Activated CD4-positive, alpha-beta T cell treated with anti-CD3 and anti-CD28 coated beads for 36 hours (primary cell): ENCODE measurements at regions of chr6 and their contacts with region 1.

Region 1: GRCh38 chr6:151723152-151723551 is 84.3 kb upstream of the ESR1 start:
- DNase-seq: peak; percentile 76
- ATAC-seq: peak; percentile 96
- H3K4me3 Mint-ChIP-seq: no peak overlapping the region
- H3K27ac Mint-ChIP-seq: peak overlapping the region; percentile 38
- H3K4me1 Mint-ChIP-seq: peaks cover 39% of the 10 kb centered on the region
- H3K27me3 Mint-ChIP-seq: peaks cover 12% of the 10 kb centered on the region

Region 2: DNA sequence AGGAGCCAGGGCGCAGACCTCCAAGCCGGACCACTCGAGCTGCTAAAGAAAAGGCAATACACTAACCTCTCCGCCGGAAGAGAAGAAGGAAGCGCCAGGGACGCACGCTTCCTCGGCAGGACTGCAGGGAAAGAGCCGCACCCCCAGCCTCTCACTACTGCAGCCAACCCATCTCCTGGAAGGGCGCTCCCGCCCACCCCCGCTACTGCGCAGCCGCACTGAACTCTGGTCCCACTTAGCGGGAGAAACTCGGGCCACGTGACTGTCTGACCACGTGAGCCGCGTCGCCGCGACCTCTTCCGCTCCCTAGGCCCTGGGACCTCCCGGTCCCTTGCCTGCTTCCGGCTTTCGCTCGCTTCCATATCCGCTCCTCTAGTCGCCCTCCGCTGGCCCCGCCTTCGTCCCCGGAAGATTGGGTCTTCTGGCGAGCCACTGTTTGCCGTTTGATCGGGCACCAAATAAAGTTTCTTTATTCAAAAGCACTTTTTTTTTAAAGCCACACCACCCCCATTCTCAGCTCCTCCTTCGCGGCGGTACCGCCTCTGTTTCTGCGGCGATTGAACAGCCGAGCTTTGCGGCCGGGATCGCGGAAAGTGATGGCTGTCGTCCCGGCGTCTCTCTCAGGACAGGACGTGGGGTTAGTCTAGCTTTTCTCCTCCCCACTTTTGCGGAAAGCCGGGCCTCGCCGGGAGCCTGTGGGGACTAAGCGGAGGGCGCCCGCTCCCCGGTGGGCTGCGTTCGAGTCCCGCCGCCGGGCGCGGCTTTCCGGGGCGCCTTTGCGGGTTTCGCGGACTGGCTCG is 271.0 kb before region 1 on chr6 and contains the start of gene RMND1:
- CTCF ChIA-PET with region 1: no interaction called
- POLR2A ChIA-PET with region 1: no interaction called
- intact Hi-C with region 1: no loop called
- DNase-seq: peak; percentile 100
- ATAC-seq: peak; percentile 98
- H3K4me3 Mint-ChIP-seq: peak within 1 kb of the TSS; percentile 96
- H3K27ac Mint-ChIP-seq: peak within 1 kb of the TSS; percentile 85
- H3K4me1 Mint-ChIP-seq: peaks cover 30% of the 10 kb centered on the region
- H3K27me3 Mint-ChIP-seq: no peaks in the 10 kb centered on the region
- total RNA-seq, gene RMND1: 20.8 to 21.5 TPM

Region 3: GRCh38 chr6:151682918-151683317 is 40.2 kb before region 1 on chr6:
- CTCF ChIA-PET with region 1: no interaction called
- POLR2A ChIA-PET with region 1: no interaction called
- intact Hi-C with region 1: no loop called
- DNase-seq: no peak
- ATAC-seq: no peak
- H3K4me3 Mint-ChIP-seq: no peak overlapping the region
- H3K27ac Mint-ChIP-seq: no peak overlapping the region
- H3K4me1 Mint-ChIP-seq: peaks cover 12% of the 10 kb centered on the region
- H3K27me3 Mint-ChIP-seq: peaks cover 6% of the 10 kb centered on the region

Region 4: GRCh38 chr6:151702851-151703611 is 20.1 kb before region 1 on chr6:
- CTCF ChIA-PET with region 1: no interaction called
- POLR2A ChIA-PET with region 1: no interaction called
- intact Hi-C with region 1: loop called (anchors 1 kb)
- DNase-seq: no peak
- ATAC-seq: peak; percentile 11
- H3K4me3 Mint-ChIP-seq: no peak overlapping the region
- H3K27ac Mint-ChIP-seq: peak overlapping the region; percentile 35
- H3K4me1 Mint-ChIP-seq: peaks cover 36% of the 10 kb centered on the region
- H3K27me3 Mint-ChIP-seq: peaks cover 7% of the 10 kb centered on the region

Region 5: DNA sequence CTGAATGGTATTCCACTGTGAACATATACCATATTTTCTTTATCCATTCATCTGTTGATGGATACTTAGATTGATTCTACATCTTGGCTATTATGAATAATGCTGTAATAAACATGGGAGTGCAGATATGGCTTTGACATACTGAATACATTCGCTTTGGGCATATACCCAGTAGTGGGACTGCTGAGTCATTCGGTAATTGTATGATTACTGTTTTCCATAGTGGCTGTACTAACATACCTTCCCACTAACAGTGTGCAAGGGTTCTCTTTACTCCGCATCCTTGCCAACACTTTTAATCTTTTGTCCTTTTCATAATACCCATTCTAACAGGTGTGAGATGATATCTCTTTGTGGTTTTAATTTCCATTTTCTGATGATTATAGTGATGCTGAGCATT is 13.8 kb before region 1 on chr6:
- CTCF ChIA-PET with region 1: no interaction called
- POLR2A ChIA-PET with region 1: no interaction called
- intact Hi-C with region 1: loop called (anchors 1 kb)
- DNase-seq: no peak
- ATAC-seq: peak; percentile 73
- H3K4me3 Mint-ChIP-seq: no peak overlapping the region
- H3K27ac Mint-ChIP-seq: no peak overlapping the region
- H3K4me1 Mint-ChIP-seq: peaks cover 11% of the 10 kb centered on the region
- H3K27me3 Mint-ChIP-seq: peaks cover 3% of the 10 kb centered on the region

Region 6: GRCh38 chr6:151757506-151758245 is 34.5 kb after region 1 on chr6:
- CTCF ChIA-PET with region 1: no interaction called
- POLR2A ChIA-PET with region 1: no interaction called
- intact Hi-C with region 1: loop called (anchors 1 kb)
- DNase-seq: peak; percentile 62
- ATAC-seq: peak; percentile 90
- H3K4me3 Mint-ChIP-seq: no peak overlapping the region
- H3K27ac Mint-ChIP-seq: peak overlapping the region; percentile 82
- H3K4me1 Mint-ChIP-seq: peaks cover 25% of the 10 kb centered on the region
- H3K27me3 Mint-ChIP-seq: peaks cover 2% of the 10 kb centered on the region